ENCODE measurements at regions of chr5 and their contacts with region 1.

Region 1: DNA sequence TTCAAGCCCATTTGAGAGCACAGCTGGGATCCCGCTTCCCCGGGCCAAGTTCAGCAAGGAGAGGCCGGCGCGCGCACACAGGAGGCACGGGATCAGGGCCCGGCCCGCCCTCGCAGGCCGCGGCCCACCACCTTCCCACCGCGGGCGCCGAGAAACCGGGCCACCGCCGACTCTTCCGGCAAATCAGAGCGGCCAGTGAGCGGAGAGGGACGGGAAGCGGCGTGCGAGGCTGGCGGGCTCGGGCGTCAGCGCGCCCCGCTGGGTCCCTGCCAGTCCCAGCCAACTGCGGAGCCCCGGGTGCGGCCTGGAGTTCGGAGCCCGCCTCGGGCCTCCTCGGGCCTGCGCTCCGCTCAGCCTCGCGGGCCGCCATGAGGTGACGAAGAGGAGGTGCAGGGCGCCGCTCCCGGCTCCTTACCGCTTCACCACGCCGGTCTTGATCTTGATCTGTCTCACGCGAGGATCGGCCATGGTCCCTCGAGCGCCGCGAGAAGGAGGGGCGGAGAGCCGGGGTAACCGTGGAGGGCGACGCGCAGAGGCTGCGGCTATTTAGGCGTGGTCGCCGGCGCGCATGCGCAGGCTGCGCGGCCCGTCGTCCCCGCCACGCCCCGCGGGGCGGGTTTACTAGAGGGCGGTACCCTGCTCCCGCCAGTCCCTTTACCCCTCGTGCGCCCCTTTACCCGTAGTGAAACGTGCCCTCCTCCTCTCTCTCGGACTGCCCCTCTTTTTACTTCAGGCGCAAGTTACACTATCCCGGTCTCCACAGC is at the start of gene TBCA:
- DNase-seq: peak; percentile 71 to 94 (median 82)
- H3K4me3 ChIP-seq: peak within 1 kb of the TSS; percentile 60 to 97 (median 87)
- H3K27ac ChIP-seq: peak within 1 kb of the TSS; percentile 49 to 98 (median 88)
- H3K27me3 ChIP-seq: no peaks in the 10 kb centered on the region
- CTCF ChIP-seq: peak in 49 of 56 donors; percentile 8 to 68 (median 35)
- total RNA-seq, gene TBCA: 58.5 to 156 (median 103) TPM

Region 2: GRCh38 chr5:77312411-77312810 is 463.6 kb before region 1 on chr5:
- intact Hi-C with region 1: no loop called
- DNase-seq: no peak
- H3K4me3 ChIP-seq: no peak overlapping the region
- H3K27ac ChIP-seq: peak overlapping the region in 7 of 59 donors; percentile 18 to 58 (median 34)
- H3K27me3 ChIP-seq: no peaks in the 10 kb centered on the region
- CTCF ChIP-seq: no peak

Region 3: GRCh38 chr5:77560677-77561263 is 215.2 kb before region 1 on chr5:
- intact Hi-C with region 1: loop called in 1 of 2 experiments (anchors 5 kb)
- DNase-seq: no peak
- H3K4me3 ChIP-seq: no peak overlapping the region
- H3K27ac ChIP-seq: no peak overlapping the region
- H3K27me3 ChIP-seq: peaks cover 0 to 7% (median 0%) of the 10 kb centered on the region in 45 donors
- CTCF ChIP-seq: peak; percentile 45 to 83 (median 64)

Region 4: DNA sequence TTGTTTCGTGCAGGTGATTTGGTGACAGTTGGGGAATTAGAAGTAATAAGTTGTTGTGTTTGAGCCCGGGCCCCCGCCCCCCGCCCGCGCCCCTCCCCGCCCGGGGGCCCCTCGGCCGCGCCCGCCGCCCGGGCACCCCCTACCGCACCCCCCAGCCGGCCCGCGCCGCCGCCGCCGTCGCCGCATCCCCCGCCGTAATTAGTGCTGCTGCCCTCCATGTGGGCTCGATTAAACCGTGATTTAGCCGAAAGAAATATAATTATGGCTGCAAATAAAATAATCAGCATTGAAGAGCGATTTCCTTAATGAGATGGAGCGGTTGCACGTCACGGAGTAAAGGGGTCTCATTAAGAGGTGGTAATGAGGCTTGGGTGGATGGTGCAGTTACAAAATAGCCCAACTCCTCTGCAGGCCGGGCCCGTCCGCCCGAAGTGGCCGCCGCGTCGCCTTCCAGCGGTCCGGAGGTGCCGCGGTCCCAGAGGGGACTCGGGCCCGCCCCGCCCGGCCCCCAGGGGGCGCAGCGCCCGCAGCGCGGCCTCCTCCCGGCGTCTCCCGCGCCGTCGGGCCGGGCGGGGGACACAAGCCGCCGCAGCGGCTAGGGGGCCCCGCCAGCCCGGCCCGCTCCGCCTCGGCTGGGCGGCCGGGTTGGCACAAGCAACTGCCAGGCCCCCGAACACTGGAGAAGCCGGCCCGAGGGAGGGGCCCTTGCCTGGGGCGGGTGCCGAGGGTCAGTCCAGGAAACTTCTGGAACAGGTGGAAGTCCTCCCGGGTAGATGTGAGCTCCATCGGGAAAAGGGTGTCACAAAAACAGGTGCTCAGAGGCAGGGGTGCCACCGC is 130.6 kb before region 1 on chr5:
- intact Hi-C with region 1: loop called (anchors 2 to 5 kb)
- DNase-seq: peak in 1 of 10 donors; percentile 63
- H3K4me3 ChIP-seq: peak overlapping the region in 51 of 59 donors; percentile 10 to 66 (median 45)
- H3K27ac ChIP-seq: no peak overlapping the region
- H3K27me3 ChIP-seq: peaks cover 26 to 65% (median 52%) of the 10 kb centered on the region in 45 donors
- CTCF ChIP-seq: peak in 48 of 56 donors; percentile 13 to 77 (median 44)

Region 5: DNA sequence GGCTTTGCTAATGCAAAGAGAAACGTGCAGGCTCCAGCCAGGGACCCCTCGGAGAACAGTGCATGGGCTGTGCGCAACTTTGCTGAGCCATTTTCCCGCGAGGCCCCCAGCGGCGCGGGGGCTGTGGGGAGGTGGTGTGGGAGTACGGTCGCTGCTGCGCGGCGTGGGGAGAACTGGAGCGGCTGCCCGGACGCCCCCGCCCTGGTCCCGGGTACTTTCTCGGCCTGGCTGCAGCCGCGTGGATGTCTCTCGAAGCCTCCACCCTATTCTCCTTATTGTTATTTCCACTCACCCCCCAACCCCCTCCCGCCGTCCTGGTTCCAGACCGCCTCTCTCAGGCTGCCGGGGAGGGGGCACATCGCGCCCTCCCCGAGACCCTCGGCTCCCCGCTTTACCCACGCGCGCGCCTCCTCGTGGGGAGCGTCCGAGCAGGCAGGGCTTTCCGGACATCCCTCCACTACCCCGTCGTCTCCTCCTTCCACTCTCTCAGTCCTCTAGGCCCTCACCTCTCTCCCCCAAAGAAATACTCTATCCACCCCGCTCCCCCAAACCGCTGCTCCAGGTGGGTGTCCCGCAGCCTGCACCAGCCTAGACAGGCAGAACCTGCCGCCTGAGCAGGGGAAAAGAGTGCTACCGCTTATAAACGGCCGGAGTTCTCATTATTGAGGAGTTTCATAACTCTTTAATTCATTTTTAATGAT is 68.8 kb after region 1 on chr5:
- intact Hi-C with region 1: loop called in 1 of 2 experiments (anchors 5 kb)
- DNase-seq: peak in 3 of 10 donors; percentile 26 to 52 (median 34)
- H3K4me3 ChIP-seq: peak overlapping the region; percentile 42 to 77 (median 60)
- H3K27ac ChIP-seq: peak overlapping the region in 56 of 59 donors; percentile 2 to 88 (median 69)
- H3K27me3 ChIP-seq: peaks cover 0 to 15% (median 0%) of the 10 kb centered on the region in 45 donors
- CTCF ChIP-seq: peak in 26 of 56 donors; percentile 8 to 50 (median 24)

Region 6: DNA sequence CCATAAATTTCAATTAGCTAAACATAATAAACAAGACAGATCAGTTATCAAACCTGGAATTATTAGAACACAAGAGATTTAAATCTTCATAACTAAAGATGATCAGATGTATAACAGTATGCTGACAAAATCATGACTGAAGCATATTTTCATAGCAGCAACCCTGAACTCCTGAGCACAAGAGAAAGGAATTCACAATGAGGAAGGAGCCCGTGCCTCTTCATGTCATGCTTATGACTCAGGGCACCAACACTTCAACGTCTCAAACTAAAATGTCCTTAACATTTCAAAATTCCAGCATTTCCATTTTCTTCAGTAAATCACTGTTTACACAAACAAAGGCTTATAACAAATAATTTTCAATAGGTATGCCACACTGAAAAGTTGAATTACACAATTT is 511.9 kb after region 1 on chr5:
- intact Hi-C with region 1: loop called in 1 of 2 experiments (anchors 10 kb)
- DNase-seq: no peak
- H3K4me3 ChIP-seq: peak overlapping the region in 3 of 59 donors; percentile 0 to 5 (median 1)
- H3K27ac ChIP-seq: peak overlapping the region in 18 of 59 donors; percentile 1 to 55 (median 25)
- H3K27me3 ChIP-seq: no peaks in the 10 kb centered on the region
- CTCF ChIP-seq: no peak

Measured in dorsolateral prefrontal cortex (tissue), 120 donors.